PC-9 (cell line): ENCODE measurements at regions of chr18 and their contacts with region 1.

Region 1: DNA sequence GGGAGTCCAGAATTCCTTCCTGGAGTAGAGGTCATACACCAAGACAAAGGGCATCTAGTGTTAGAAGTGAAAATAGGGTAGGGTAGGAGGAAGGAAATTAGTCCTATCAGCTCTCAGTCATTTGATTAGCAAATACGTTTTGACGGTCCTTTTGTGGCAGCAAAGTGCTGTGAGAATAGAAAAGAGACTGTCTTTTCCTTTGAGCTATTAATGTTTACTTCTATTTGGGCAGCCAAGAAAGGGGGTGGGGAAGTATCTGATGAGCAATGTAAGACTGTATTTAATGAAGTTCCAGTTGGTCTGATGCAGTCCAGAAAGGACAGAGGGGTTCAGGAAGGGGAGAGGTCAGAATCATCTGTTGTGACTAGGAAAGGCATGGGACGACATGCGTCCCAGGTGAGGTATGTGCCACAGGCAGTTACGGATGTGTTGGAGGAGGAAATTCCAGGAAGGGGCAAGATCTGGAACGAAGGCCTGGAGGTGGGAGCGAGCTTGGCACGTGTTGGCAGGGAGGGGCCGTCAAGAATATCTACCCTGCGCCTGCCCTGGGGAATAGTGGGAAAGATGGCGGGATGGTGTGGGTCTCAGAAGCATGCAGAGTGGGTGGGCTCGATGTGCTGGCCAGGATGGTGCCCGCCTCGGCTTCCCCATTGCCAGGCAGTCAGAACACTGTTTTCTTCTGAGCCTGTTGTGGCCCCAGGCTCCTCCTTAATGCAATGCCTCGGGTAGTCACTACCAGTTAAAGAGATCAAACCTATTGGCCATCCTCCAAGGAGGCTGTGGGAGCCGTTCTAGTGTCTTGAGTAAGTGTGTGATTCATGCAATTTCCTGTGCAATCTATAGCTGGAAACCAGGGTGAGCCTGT is 57.9 kb upstream of the TXNDC2 start:
- DNase-seq: peak; percentile 86 to 97
- H3K4me3 ChIP-seq: peak overlapping the region; percentile 1; the same call in 1 of the 2 replicates
- H3K27ac ChIP-seq: peak overlapping the region; percentile 93
- H3K4me1 ChIP-seq: peaks cover 60% of the 10 kb centered on the region
- H3K27me3 ChIP-seq: no peaks in the 10 kb centered on the region
- CTCF ChIP-seq: no peak

Region 2: GRCh38 chr18:9565407-9565806 is 262.5 kb before region 1 on chr18:
- CTCF ChIA-PET with region 1: no interaction called
- POLR2A ChIA-PET with region 1: interaction called, 11 read pairs
- intact Hi-C with region 1: no loop called
- DNase-seq: no peak
- H3K4me3 ChIP-seq: no peak overlapping the region
- H3K27ac ChIP-seq: no peak overlapping the region
- H3K4me1 ChIP-seq: no peaks in the 10 kb centered on the region
- H3K27me3 ChIP-seq: no peaks in the 10 kb centered on the region
- CTCF ChIP-seq: no peak

Region 3: GRCh38 chr18:9661564-9661963 is 166.3 kb before region 1 on chr18:
- CTCF ChIA-PET with region 1: no interaction called
- POLR2A ChIA-PET with region 1: no interaction called
- intact Hi-C with region 1: no loop called
- DNase-seq: no peak
- H3K4me3 ChIP-seq: no peak overlapping the region
- H3K27ac ChIP-seq: no peak overlapping the region
- H3K4me1 ChIP-seq: peaks cover 35% of the 10 kb centered on the region
- H3K27me3 ChIP-seq: no peaks in the 10 kb centered on the region
- CTCF ChIP-seq: no peak

Region 4: GRCh38 chr18:9731380-9731779 is 96.5 kb before region 1 on chr18:
- CTCF ChIA-PET with region 1: no interaction called
- POLR2A ChIA-PET with region 1: interaction called, 4 read pairs
- intact Hi-C with region 1: loop called (anchors 2 kb)
- DNase-seq: peak in 1 of 2 experiments; percentile 60
- H3K4me3 ChIP-seq: no peak overlapping the region
- H3K27ac ChIP-seq: peak overlapping the region; percentile 45; the same call in 1 of the 2 replicates
- H3K4me1 ChIP-seq: peaks cover 48% of the 10 kb centered on the region
- H3K27me3 ChIP-seq: no peaks in the 10 kb centered on the region
- CTCF ChIP-seq: no peak

Region 5: GRCh38 chr18:9782073-9782857 is 45.6 kb before region 1 on chr18:
- CTCF ChIA-PET with region 1: no interaction called
- POLR2A ChIA-PET with region 1: no interaction called
- intact Hi-C with region 1: no loop called
- DNase-seq: peak in 1 of 2 experiments; percentile 86
- H3K4me3 ChIP-seq: no peak overlapping the region
- H3K27ac ChIP-seq: peak overlapping the region; percentile 67
- H3K4me1 ChIP-seq: peaks cover 52% of the 10 kb centered on the region
- H3K27me3 ChIP-seq: no peaks in the 10 kb centered on the region
- CTCF ChIP-seq: no peak

Region 6: GRCh38 chr18:9838144-9838877 is 10.4 kb after region 1 on chr18:
- CTCF ChIA-PET with region 1: no interaction called
- POLR2A ChIA-PET with region 1: interaction called, 4 read pairs
- intact Hi-C with region 1: loop called (anchors 1 kb)
- DNase-seq: peak; percentile 91 to 94
- H3K4me3 ChIP-seq: no peak overlapping the region
- H3K27ac ChIP-seq: peak overlapping the region; percentile 39
- H3K4me1 ChIP-seq: peaks cover 42% of the 10 kb centered on the region
- H3K27me3 ChIP-seq: no peaks in the 10 kb centered on the region
- CTCF ChIP-seq: no peak

Region 7: DNA sequence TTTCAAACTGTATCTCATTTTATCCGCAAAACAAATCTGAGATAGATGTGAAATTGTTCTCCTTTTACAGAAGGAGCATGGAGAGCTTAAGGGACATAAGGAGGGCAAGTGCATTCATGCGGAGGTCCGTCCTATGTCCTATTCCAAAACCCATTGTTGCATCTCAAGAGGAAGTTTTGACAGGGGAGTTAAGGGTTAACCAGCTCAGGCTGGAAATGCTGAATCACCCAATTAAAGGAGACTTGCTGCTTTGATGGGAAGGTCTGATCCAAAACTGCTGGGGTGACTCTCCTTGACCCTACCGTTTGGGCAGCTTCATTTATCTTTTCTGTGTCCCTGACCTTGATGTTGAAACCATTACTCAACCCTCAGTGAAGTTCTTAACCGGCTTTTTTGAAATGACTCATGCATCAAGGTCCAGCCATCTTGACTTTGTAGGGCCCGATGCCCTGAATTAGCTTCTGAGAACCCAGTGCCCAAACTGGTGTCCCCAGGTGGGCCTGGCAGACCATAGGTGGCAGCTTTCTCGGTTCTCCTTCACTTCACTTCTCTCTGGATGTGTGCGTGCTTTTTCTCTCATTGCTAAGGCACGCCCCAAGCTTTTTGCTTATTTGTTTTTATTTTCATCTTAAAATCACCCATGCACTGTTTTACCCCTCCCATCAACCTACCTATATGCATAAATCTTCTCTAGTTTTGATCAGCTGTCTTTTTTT is 42.0 kb after region 1 on chr18:
- CTCF ChIA-PET with region 1: no interaction called
- POLR2A ChIA-PET with region 1: interaction called, 6 read pairs
- intact Hi-C with region 1: loop called (anchors 1 kb)
- DNase-seq: peak; percentile 40 to 84
- H3K4me3 ChIP-seq: no peak overlapping the region; the same call in 1 of the 2 replicates
- H3K27ac ChIP-seq: peak overlapping the region; percentile 93
- H3K4me1 ChIP-seq: peaks cover 50% of the 10 kb centered on the region
- H3K27me3 ChIP-seq: no peaks in the 10 kb centered on the region
- CTCF ChIP-seq: no peak

Region 8: DNA sequence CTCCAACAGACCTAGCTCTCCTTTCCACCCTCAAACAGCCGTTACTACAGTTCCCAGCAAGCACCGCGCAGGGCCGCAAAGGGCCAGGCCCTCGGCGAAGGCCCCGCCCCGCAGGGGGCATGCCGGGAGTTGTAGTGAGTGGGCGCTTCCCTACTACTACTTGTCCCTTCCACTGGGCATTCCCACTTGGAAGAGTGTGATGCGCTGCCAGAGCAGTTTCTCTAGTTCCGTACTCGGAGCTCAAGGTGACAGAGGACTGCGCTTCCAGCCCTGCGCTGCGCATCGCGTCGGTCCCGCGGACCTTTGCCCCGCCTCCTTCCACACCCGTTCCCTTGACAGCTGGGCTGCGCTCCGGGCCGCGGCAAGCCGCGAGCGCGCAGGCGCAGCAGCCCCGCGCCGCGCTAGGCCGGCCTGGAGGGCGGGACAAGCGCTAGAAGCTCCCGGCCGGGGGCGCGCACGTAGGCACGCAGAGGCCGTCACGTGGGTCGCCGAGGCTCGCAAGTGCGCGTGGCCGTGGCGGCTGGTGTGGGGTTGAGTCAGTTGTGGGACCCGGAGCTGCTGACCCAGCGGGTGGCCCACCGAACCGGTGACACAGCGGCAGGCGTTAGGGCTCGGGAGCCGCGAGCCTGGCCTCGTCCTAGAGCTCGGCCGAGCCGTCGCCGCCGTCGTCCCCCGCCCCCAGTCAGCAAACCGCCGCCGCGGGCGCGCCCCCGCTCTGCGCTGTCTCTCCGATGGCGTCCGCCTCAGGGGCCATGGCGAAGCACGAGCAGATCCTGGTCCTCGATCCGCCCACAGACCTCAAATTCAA is 85.9 kb after region 1 on chr18 and contains the start of gene VAPA:
- CTCF ChIA-PET with region 1: no interaction called
- POLR2A ChIA-PET with region 1: interaction called, 8 read pairs
- intact Hi-C with region 1: loop called (anchors 1 kb)
- DNase-seq: peak; percentile 78 to 97
- H3K4me3 ChIP-seq: peak within 1 kb of the TSS; percentile 99
- H3K27ac ChIP-seq: peak within 1 kb of the TSS; percentile 90
- H3K4me1 ChIP-seq: peaks cover 39% of the 10 kb centered on the region
- H3K27me3 ChIP-seq: no peaks in the 10 kb centered on the region
- CTCF ChIP-seq: no peak
- total RNA-seq, gene VAPA: 340 and 359 TPM in 2 replicates